ENCODE measurements at regions of chr18 and their contacts with region 1.

Region 1: DNA sequence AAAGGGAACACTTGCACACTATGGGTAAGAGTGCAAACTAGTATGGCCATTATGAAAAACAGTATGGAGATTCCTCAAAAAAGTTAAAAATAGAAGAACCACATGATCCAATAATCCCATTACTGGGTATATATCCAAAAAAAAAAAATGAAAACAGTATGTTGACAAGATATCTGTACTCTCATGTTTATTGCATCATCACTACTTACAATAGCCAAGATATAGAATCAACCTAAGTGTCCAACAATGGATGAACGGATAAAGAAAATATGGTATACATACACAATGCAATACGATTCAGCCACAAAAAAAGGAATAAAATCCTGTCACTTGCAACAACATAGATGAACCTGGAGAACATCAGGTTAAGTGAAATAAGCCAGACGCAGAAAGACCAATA is 73.3 kb downstream of the LOXHD1 start:
- DNase-seq: no peak

Region 2: DNA sequence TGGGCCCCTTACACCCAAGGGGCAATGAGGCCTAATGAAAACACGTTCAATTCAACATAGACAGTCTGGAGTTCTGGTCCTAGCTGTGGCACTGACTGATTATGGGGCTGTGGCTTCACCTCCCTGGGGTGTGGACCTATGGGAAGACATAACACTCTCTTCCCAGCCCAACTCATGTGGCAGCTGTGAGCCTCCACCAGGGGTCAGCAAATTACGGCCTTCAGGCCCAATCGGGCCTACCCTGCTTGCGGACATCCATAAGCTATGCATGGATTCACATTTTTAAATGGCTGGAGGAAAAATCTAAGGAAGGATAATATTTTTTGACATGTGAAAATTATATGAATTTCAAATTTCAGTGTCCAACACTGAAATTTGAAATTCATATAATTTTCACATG is 28.0 kb before region 1 on chr18:
- intact Hi-C with region 1: loop called in 1 of 2 experiments (anchors 1 kb)
- DNase-seq: no peak